Right cardiac atrium (tissue), 5 donors: ENCODE measurements at regions of chr14 and their contacts with region 1.

Region 1: GRCh38 chr14:96574633-96575632 is 72.8 kb downstream of the PAPOLA start:
- DNase-seq: peak; percentile 35 to 59 (median 43)
- ATAC-seq: peak; percentile 32 to 59
- H3K4me3 ChIP-seq: no peak overlapping the region
- H3K27ac ChIP-seq: no peak overlapping the region
- H3K4me1 ChIP-seq: peaks cover 2% of the 10 kb centered on the region
- H3K27me3 ChIP-seq: no peaks in the 10 kb centered on the region

Region 2: GRCh38 chr14:96735526-96735925 is 160.6 kb after region 1 on chr14:
- intact Hi-C with region 1: loop called in 2 of 4 experiments (anchors 10 kb)
- DNase-seq: no peak
- ATAC-seq: no peak
- H3K4me3 ChIP-seq: no peak overlapping the region
- H3K27ac ChIP-seq: no peak overlapping the region
- H3K4me1 ChIP-seq: no peaks in the 10 kb centered on the region
- H3K27me3 ChIP-seq: peaks cover 9% of the 10 kb centered on the region